GM12878 (cell line): ENCODE measurements at regions of chr2 and their contacts with region 1.

Region 1: GRCh38 chr2:159895258-159896065 is 97.5 kb upstream of the CD302 start:
- DNase-seq: no peak
- ATAC-seq: peak; percentile 62
- H3K4me3 ChIP-seq: peak overlapping the region; percentile 32
- H3K27ac ChIP-seq: peak overlapping the region; percentile 83
- H3K4me1 ChIP-seq: peaks cover 89% of the 10 kb centered on the region
- H3K27me3 ChIP-seq: no peaks in the 10 kb centered on the region
- CTCF ChIP-seq: no peak
- EP300 ChIP-seq: peak; percentile 84 to 92; a peak in 3 of 4 replicates
- POLR2A ChIP-seq: peak; percentile 21; the same call in 1 of the 2 replicates
- RAD21 ChIP-seq: no peak

Region 2: DNA sequence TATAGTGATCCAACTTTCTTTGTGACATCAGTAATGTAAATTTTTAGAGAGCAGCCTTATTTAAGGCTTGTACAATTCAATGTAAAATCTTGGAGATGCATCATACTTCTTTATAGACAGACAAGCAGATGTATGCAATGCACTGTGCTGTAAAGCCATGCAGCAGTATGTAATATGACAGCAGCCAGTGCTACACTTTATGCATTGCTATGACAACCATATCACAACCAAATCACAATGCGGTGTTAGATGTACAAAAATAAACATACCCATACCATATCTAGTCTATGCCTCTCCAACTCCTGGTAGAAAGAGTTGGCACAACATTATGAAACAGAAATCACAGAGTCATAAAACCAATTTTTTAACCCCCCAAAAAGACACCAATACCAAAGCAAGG is 498.7 kb before region 1 on chr2:
- CTCF ChIA-PET with region 1: no interaction called
- POLR2A ChIA-PET with region 1: no interaction called
- RAD21 ChIA-PET with region 1: no interaction called
- SMC1A ChIA-PET with region 1: no interaction called
- in situ Hi-C with region 1: no loop called
- intact Hi-C with region 1: no loop called
- DNase-seq: no peak
- ATAC-seq: no peak
- H3K4me3 ChIP-seq: no peak overlapping the region
- H3K27ac ChIP-seq: no peak overlapping the region
- H3K4me1 ChIP-seq: no peaks in the 10 kb centered on the region
- H3K27me3 ChIP-seq: no peaks in the 10 kb centered on the region
- CTCF ChIP-seq: no peak
- EP300 ChIP-seq: no peak
- POLR2A ChIP-seq: no peak
- RAD21 ChIP-seq: no peak

Region 3: DNA sequence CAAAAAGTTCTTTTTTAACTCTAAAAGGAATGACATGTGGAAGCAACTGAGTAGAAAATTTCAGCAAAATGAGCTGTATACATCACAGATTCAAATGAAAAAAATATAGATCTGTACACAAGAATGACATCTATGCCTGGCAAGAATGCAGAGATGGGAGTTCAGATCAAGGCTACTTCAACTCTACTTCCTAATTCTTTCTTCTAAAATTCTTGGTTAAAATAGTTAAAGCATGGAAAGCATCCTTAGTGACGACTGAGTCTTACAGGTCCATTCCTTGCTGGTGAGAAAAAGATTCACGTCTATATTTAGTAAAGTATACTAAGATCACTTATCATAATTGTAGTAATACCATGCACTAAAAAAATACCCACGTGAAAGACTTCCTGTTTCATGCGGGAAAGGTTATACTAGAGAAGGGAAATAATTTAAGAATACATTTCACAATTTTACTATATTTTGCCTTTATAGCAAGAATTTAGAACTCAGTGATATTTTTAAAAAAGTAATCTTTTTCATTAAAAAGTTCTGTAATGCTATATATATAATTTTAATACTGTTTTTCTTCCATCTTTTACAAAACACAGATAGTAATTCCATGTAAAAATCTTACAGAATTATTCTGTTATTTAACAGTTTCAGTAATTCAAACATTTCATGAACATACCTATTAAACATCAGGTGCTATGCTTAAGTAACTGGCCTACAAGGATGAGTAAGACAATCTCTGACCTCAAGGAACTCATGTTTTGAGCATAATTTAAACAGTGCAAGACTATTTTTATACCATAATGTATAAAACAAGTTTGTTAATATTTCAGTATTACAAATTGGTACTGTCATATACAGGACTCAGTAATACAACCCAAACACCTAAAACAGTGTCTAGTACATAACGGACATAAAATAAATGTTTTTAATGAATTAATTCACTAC is 438.7 kb before region 1 on chr2:
- CTCF ChIA-PET with region 1: no interaction called
- POLR2A ChIA-PET with region 1: no interaction called
- RAD21 ChIA-PET with region 1: no interaction called
- SMC1A ChIA-PET with region 1: no interaction called
- in situ Hi-C with region 1: no loop called
- intact Hi-C with region 1: no loop called
- DNase-seq: no peak
- ATAC-seq: peak; percentile 69
- H3K4me3 ChIP-seq: no peak overlapping the region
- H3K27ac ChIP-seq: no peak overlapping the region
- H3K4me1 ChIP-seq: peaks cover 7% of the 10 kb centered on the region; the same call in 1 of the 2 replicates
- H3K27me3 ChIP-seq: no peaks in the 10 kb centered on the region
- CTCF ChIP-seq: no peak
- EP300 ChIP-seq: no peak
- POLR2A ChIP-seq: no peak
- RAD21 ChIP-seq: no peak

Region 4: GRCh38 chr2:159879051-159879604 is 16.3 kb before region 1 on chr2:
- CTCF ChIA-PET with region 1: interaction called, 18 read pairs
- POLR2A ChIA-PET with region 1: interaction called, 840 read pairs
- RAD21 ChIA-PET with region 1: interaction called, 30 read pairs
- SMC1A ChIA-PET with region 1: interaction called, 1,536 read pairs
- in situ Hi-C with region 1: no loop called
- intact Hi-C with region 1: loop called (anchors 1 kb)
- DNase-seq: peak; percentile 77
- ATAC-seq: peak; percentile 88
- H3K4me3 ChIP-seq: no peak overlapping the region
- H3K27ac ChIP-seq: peak overlapping the region; percentile 85
- H3K4me1 ChIP-seq: peaks cover 17% of the 10 kb centered on the region
- H3K27me3 ChIP-seq: no peaks in the 10 kb centered on the region
- CTCF ChIP-seq: no peak
- EP300 ChIP-seq: peak; percentile 89 to 95
- POLR2A ChIP-seq: no peak
- RAD21 ChIP-seq: no peak

Region 5: GRCh38 chr2:159921752-159922404 is 26.4 kb after region 1 on chr2:
- CTCF ChIA-PET with region 1: interaction called, 335 read pairs
- POLR2A ChIA-PET with region 1: interaction called, 840 read pairs
- RAD21 ChIA-PET with region 1: interaction called, 137 read pairs
- SMC1A ChIA-PET with region 1: interaction called, 1,536 read pairs
- in situ Hi-C with region 1: no loop called
- intact Hi-C with region 1: no loop called
- DNase-seq: no peak
- ATAC-seq: peak; percentile 97
- H3K4me3 ChIP-seq: 0 out of 2 replicates have a peak overlapping the region, but pooled peaks have one; percentile 16
- H3K27ac ChIP-seq: peak overlapping the region; percentile 4
- H3K4me1 ChIP-seq: peaks cover 13% of the 10 kb centered on the region
- H3K27me3 ChIP-seq: no peaks in the 10 kb centered on the region
- CTCF ChIP-seq: peak; percentile 91 to 96 (median 95)
- EP300 ChIP-seq: no peak
- POLR2A ChIP-seq: peak; percentile 35; the same call in 1 of the 2 replicates
- RAD21 ChIP-seq: peak; percentile 76

Region 6: DNA sequence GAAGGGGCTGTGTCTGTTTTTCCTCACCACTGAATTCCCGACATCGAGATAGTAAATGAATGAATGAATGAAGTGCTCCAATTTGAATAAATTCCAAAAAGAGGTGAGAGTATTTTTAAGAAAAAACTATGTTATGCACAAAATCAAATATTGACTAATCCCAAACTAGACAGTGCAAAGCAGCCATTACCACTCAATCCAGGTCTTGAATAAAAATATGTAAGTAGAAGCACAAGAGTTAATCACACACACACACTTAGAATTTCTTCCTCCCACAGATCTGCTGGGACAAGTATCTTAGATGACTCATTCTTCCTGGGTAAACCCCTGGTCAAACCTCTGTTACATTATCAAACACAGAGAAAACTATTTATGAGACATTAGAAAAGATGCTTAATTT is 64.9 kb after region 1 on chr2:
- CTCF ChIA-PET with region 1: interaction called, 3 read pairs
- POLR2A ChIA-PET with region 1: interaction called, 4 read pairs
- RAD21 ChIA-PET with region 1: no interaction called
- SMC1A ChIA-PET with region 1: interaction called, 8 read pairs
- in situ Hi-C with region 1: no loop called
- intact Hi-C with region 1: loop called (anchors 5 kb)
- DNase-seq: peak; percentile 44
- ATAC-seq: peak; percentile 67
- H3K4me3 ChIP-seq: no peak overlapping the region
- H3K27ac ChIP-seq: peak overlapping the region; percentile 24; the same call in 1 of the 2 replicates
- H3K4me1 ChIP-seq: peaks cover 25% of the 10 kb centered on the region
- H3K27me3 ChIP-seq: no peaks in the 10 kb centered on the region
- CTCF ChIP-seq: no peak
- EP300 ChIP-seq: no peak; a peak in 1 of 4 replicates
- POLR2A ChIP-seq: no peak
- RAD21 ChIP-seq: no peak

Region 7: GRCh38 chr2:160109936-160110673 is 214.6 kb after region 1 on chr2:
- CTCF ChIA-PET with region 1: no interaction called
- POLR2A ChIA-PET with region 1: no interaction called
- RAD21 ChIA-PET with region 1: no interaction called
- SMC1A ChIA-PET with region 1: no interaction called
- in situ Hi-C with region 1: no loop called
- intact Hi-C with region 1: loop called (anchors 10 kb)
- DNase-seq: no peak
- ATAC-seq: peak; percentile 84
- H3K4me3 ChIP-seq: no peak overlapping the region
- H3K27ac ChIP-seq: no peak overlapping the region
- H3K4me1 ChIP-seq: peaks cover 13% of the 10 kb centered on the region
- H3K27me3 ChIP-seq: no peaks in the 10 kb centered on the region
- CTCF ChIP-seq: peak; percentile 68 to 87 (median 80)
- EP300 ChIP-seq: no peak
- POLR2A ChIP-seq: no peak
- RAD21 ChIP-seq: peak; percentile 90

Region 8: GRCh38 chr2:161160226-161161069 is 1265.0 kb after region 1 on chr2 and contains the start of gene TANK:
- CTCF ChIA-PET with region 1: no interaction called
- POLR2A ChIA-PET with region 1: no interaction called
- RAD21 ChIA-PET with region 1: no interaction called
- SMC1A ChIA-PET with region 1: no interaction called
- in situ Hi-C with region 1: no loop called
- intact Hi-C with region 1: loop called (anchors 10 kb)
- DNase-seq: peak; percentile 83
- ATAC-seq: peak; percentile 90
- H3K4me3 ChIP-seq: peak within 1 kb of the TSS; percentile 93
- H3K27ac ChIP-seq: peak within 1 kb of the TSS; percentile 89
- H3K4me1 ChIP-seq: peaks cover 25% of the 10 kb centered on the region
- H3K27me3 ChIP-seq: no peaks in the 10 kb centered on the region
- CTCF ChIP-seq: no peak
- EP300 ChIP-seq: no peak
- POLR2A ChIP-seq: peak; percentile 96
- RAD21 ChIP-seq: no peak
- polyA plus RNA-seq, gene TANK: 102 to 127 TPM

Region 9: DNA sequence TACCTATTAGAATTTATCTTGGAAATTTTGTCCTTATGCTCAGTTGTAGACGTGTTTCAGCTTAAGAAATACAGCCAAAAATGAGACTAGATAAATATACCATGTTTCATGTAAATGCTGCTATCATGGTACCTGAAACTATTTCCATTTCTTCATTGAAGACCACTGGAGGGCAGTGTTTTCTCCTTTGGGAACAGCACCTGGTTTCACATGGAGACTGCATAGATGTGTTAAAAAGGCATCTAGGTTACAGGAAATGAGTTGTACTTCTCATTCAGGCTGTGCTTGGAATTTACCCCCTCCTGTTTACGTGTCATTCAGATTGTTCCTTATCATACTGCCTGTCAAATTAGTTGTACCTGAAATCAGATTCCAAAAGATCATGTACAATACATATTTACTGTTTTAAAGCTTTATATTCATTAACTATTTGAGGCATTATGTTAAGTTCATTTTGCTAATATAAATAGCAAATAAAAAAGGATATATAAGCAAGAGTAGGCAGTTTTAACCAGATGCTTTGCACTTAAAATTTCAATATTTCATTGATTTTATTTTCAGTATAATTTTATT is 1355.5 kb after region 1 on chr2:
- CTCF ChIA-PET with region 1: no interaction called
- POLR2A ChIA-PET with region 1: no interaction called
- RAD21 ChIA-PET with region 1: no interaction called
- SMC1A ChIA-PET with region 1: no interaction called
- in situ Hi-C with region 1: no loop called
- intact Hi-C with region 1: no loop called
- DNase-seq: no peak
- ATAC-seq: peak; percentile 78
- H3K4me3 ChIP-seq: no peak overlapping the region
- H3K27ac ChIP-seq: no peak overlapping the region
- H3K4me1 ChIP-seq: no peaks in the 10 kb centered on the region
- H3K27me3 ChIP-seq: no peaks in the 10 kb centered on the region
- CTCF ChIP-seq: peak; percentile 48 to 58 (median 48); a peak in 5 of 6 replicates
- EP300 ChIP-seq: no peak
- POLR2A ChIP-seq: no peak
- RAD21 ChIP-seq: peak; percentile 56